Activated B cell treated with CpG ODN at 0.5 μM for 24 hours (primary cell): ENCODE measurements at regions of chr9 and their contacts with region 1.

Region 1: GRCh38 chr9:132894356-132895240 is 15.9 kb downstream of the SPACA9 start:
- DNase-seq: no peak
- ATAC-seq: no peak
- H3K4me3 Mint-ChIP-seq: no peak overlapping the region
- H3K27ac Mint-ChIP-seq: no peak overlapping the region
- H3K4me1 Mint-ChIP-seq: peaks cover 10% of the 10 kb centered on the region
- H3K27me3 Mint-ChIP-seq: no peaks in the 10 kb centered on the region
- CTCF ChIP-seq: no peak

Region 2: DNA sequence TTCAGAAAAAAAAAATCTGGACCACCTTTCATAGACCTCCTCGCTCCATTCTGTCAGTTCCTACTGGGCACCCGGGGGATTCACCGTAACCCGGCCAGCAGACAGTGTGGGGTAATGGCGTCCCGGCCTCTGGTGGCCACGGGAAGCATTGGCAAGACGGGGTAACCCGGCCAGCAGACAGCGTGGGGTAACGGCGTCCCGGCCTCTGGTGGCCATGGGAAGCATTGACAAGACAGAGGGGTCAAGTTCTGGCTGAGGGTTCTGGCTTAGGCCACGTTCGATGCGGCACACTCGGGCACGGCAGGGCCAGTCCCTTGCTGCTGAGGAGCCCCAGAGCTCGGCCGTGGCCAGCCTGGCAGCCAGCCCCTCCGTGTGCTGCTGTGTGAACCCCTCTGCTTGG is 1038.5 kb before region 1 on chr9:
- CTCF ChIA-PET with region 1: no interaction called
- POLR2A ChIA-PET with region 1: interaction called, 14 read pairs
- intact Hi-C with region 1: no loop called
- DNase-seq: no peak
- ATAC-seq: no peak
- H3K4me3 Mint-ChIP-seq: no peak overlapping the region
- H3K27ac Mint-ChIP-seq: no peak overlapping the region
- H3K4me1 Mint-ChIP-seq: peaks cover 5% of the 10 kb centered on the region
- H3K27me3 Mint-ChIP-seq: no peaks in the 10 kb centered on the region
- CTCF ChIP-seq: no peak

Region 3: DNA sequence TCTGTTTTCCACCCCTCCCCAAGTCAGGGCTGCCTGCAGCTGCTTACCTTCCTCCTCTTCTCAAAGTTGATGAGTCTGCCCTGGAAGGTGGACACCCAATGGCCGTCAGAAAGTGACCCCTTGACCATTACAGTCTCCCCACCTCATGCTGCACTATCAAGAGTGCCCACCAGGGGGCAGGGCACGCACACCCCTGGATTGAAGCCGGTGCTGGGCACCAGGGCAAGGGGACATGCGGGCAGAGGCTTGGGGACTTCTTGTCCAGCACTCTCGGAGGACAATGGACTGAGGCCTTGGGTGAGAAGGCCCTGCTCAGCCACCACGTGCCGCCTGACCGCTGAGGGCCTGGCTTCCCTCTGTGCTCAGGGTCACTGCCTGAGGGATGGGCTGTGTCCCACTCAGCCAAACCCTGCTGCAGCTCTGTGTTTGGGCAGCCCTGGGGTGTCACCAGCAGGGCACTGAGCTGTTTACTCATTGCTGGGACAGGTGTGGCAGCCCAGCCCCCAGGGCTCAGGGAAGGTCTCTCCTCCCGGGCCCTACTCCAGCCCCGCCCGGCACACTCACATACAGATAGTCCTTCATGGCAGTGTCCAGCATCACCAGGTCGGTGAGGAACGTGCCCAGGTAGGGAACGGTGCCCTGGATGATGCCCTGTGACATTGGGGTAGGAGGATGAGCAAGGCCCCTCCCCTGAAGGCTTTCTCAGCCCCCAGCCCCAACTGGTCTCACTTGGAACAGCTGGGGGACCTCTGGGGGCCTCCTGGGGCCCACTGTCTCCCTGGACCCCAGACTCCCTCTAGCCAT is 208.8 kb after region 1 on chr9:
- CTCF ChIA-PET with region 1: no interaction called
- POLR2A ChIA-PET with region 1: no interaction called
- intact Hi-C with region 1: no loop called
- DNase-seq: peak; percentile 69
- ATAC-seq: peak; percentile 90
- H3K4me3 Mint-ChIP-seq: no peak overlapping the region
- H3K27ac Mint-ChIP-seq: no peak overlapping the region
- H3K4me1 Mint-ChIP-seq: no peaks in the 10 kb centered on the region
- H3K27me3 Mint-ChIP-seq: no peaks in the 10 kb centered on the region
- CTCF ChIP-seq: peak; percentile 71

Region 4: GRCh38 chr9:133658442-133659431 is 764.1 kb after region 1 on chr9:
- CTCF ChIA-PET with region 1: no interaction called
- POLR2A ChIA-PET with region 1: no interaction called
- intact Hi-C with region 1: no loop called
- DNase-seq: no peak
- ATAC-seq: no peak
- H3K4me3 Mint-ChIP-seq: no peak overlapping the region
- H3K27ac Mint-ChIP-seq: no peak overlapping the region
- H3K4me1 Mint-ChIP-seq: peaks cover 1% of the 10 kb centered on the region
- H3K27me3 Mint-ChIP-seq: peaks cover 44% of the 10 kb centered on the region
- CTCF ChIP-seq: no peak